Activated T-helper 1 cell treated with anti-CD3 and anti-CD28 coated beads, Interleukin-12 subunit alpha, Interleukin-12 subunit beta, Interleukin-2, Interleukin-4 antibody, amounts not matched to agents 30 ng/mL and 10 ng/mL and 1 ng/mL, durations not matched to agents 14 hours and 24 hours and 36 hours (primary cell): ENCODE measurements at regions of chr3 and their contacts with region 1.

Region 1: DNA sequence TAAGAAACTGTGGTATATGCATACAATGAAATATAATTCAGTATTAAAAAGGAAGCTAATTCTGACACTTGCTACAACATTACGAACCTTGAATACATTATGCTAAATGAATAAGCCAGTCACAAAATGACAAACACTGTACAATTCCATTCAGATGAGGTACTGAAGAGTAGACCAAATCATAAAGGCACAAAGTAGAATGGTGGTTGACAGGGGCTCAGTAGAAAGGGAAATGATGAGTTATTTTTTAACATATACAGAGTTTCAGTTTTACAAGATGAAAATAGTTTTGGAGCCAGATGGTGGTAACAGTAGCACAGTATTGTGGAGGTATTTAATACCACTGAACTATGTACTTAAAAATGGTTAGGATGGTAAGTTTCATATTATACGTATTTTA is 254.6 kb upstream of the RBMS3 start:
- DNase-seq: no peak
- H3K4me3 Mint-ChIP-seq: no peak overlapping the region
- H3K27ac Mint-ChIP-seq: peak overlapping the region; percentile 7
- H3K4me1 Mint-ChIP-seq: peaks cover 10% of the 10 kb centered on the region
- H3K27me3 Mint-ChIP-seq: no peaks in the 10 kb centered on the region

Region 2: GRCh38 chr3:28972921-28973320 is 53.4 kb before region 1 on chr3:
- intact Hi-C with region 1: loop called (anchors 1 kb)
- DNase-seq: no peak
- H3K4me3 Mint-ChIP-seq: no peak overlapping the region
- H3K27ac Mint-ChIP-seq: no peak overlapping the region
- H3K4me1 Mint-ChIP-seq: peaks cover 14% of the 10 kb centered on the region
- H3K27me3 Mint-ChIP-seq: peaks cover 2% of the 10 kb centered on the region

Region 3: GRCh38 chr3:29186982-29187725 is 160.9 kb after region 1 on chr3:
- intact Hi-C with region 1: loop called (anchors 1 kb)
- DNase-seq: no peak
- H3K4me3 Mint-ChIP-seq: no peak overlapping the region
- H3K27ac Mint-ChIP-seq: peak overlapping the region; percentile 8
- H3K4me1 Mint-ChIP-seq: peaks cover 36% of the 10 kb centered on the region
- H3K27me3 Mint-ChIP-seq: no peaks in the 10 kb centered on the region